Left lung (tissue), 14 donors: ENCODE measurements at regions of chr5 and their contacts with region 1.

Region 1: GRCh38 chr5:32239385-32239784 is 65.3 kb upstream of the GOLPH3 start:
- DNase-seq: peak in 1 of 4 donors; percentile 7
- ATAC-seq: no peak
- H3K4me3 ChIP-seq: no peak overlapping the region
- H3K27ac ChIP-seq: no peak overlapping the region
- H3K4me1 ChIP-seq: peaks cover 2 to 6% of the 10 kb centered on the region in 2 donors
- H3K27me3 ChIP-seq: no peaks in the 10 kb centered on the region
- CTCF ChIP-seq: no peak

Region 2: GRCh38 chr5:31853398-31854135 is 385.8 kb before region 1 on chr5:
- intact Hi-C with region 1: no loop called
- DNase-seq: peak in 1 of 4 donors; percentile 41
- ATAC-seq: peak; percentile 74
- H3K4me3 ChIP-seq: peak overlapping the region in 1 of 2 donors; percentile 53
- H3K27ac ChIP-seq: peak overlapping the region; percentile 74 to 87
- H3K4me1 ChIP-seq: peaks cover 10 to 22% of the 10 kb centered on the region in 2 donors
- H3K27me3 ChIP-seq: peaks cover 0 to 32% of the 10 kb centered on the region in 2 donors
- CTCF ChIP-seq: no peak

Region 3: DNA sequence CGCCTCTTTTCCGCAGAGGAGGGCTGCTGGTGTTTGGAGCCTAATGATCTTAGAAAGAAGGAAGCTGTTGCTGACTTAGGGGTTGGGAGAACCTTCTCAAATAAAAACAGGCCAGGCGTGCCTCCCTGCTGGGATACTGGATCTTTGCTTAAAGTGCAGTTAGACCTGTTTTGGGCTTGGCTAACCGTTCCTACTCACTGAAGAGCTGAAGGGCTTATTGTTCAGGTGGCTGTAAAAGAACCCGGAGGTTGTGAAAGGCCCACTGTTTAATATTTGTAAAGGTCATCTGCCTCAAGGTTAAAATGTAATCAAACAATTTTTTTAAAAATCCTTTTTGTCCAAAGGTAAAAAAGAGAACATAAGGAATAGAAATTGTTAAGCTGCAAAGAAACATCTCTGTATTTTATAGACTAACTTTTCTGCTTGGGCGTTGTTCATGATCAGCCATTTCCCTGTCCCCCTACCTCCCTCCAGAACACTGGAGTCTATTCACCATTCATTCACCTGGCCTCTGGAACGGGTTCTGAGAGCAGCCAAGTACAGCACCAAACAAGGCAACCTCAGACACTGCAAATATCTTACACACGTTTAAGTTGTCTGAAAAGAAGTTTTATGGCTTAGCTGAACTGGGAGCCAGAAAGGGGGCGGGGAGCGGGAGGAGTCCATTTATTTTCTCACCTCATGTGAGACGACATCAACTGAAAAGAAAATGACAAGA is 92.0 kb after region 1 on chr5:
- intact Hi-C with region 1: loop called in 1 of 2 experiments (anchors 5 kb)
- DNase-seq: peak in 1 of 4 donors; percentile 71
- ATAC-seq: peak; percentile 70
- H3K4me3 ChIP-seq: no peak overlapping the region
- H3K27ac ChIP-seq: no peak overlapping the region
- H3K4me1 ChIP-seq: no peaks in the 10 kb centered on the region
- H3K27me3 ChIP-seq: no peaks in the 10 kb centered on the region
- CTCF ChIP-seq: no peak

Region 4: GRCh38 chr5:32531885-32532520 is 292.6 kb after region 1 on chr5:
- intact Hi-C with region 1: no loop called
- DNase-seq: no peak
- ATAC-seq: peak; percentile 49
- H3K4me3 ChIP-seq: no peak overlapping the region
- H3K27ac ChIP-seq: no peak overlapping the region
- H3K4me1 ChIP-seq: peaks cover 0 to 10% of the 10 kb centered on the region in 2 donors
- H3K27me3 ChIP-seq: no peaks in the 10 kb centered on the region
- CTCF ChIP-seq: no peak

Region 5: DNA sequence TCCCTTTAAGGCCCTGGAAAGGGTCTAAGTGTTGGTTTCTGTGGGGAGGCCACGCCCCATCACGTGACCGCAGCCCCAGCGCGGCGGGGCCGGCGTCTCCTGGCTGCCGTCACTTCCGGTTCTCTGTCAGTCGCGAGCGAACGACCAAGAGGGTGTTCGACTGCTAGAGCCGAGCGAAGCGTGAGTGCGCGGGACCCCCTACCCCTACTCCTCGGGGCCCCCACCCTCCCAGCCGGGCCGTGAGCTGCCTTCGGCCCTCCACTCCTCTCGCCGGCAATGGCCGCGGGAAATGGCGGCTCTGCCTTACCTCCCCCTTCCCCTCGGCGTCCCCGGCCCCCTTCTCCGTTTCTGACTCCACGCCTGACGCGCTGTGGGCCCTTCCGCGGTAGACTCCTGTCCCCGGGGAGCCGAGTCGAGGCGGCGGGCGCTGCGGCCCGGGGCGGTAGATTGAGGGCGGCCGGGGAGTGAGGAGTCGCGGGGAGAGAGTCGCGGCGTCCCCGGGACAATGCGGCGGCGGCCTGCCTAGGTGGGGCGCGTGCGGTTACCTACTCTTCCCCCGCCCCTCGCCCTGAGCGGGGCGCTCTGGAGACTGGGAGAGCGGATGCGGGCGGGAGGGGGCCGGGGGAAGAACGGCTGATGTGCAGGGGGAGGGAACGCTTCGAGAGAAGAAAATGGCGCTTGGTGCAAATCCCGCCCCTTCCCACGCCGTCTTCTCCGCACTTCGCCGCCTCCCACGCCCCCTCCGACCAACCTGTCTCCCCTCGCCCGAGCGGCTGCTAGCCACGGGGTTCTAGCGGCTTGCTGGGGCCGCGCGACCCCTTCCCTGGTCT is 346.3 kb after region 1 on chr5 and contains the start of gene SUB1:
- intact Hi-C with region 1: no loop called
- DNase-seq: peak; percentile 91 to 97 (median 96)
- ATAC-seq: peak; percentile 92
- H3K4me3 ChIP-seq: peak within 1 kb of the TSS; percentile 88
- H3K27ac ChIP-seq: peak within 1 kb of the TSS; percentile 99
- H3K4me1 ChIP-seq: peaks cover 23 to 81% of the 10 kb centered on the region in 2 donors
- H3K27me3 ChIP-seq: no peaks in the 10 kb centered on the region
- CTCF ChIP-seq: no peak
- polyA plus RNA-seq, gene SUB1: 245 to 289 (median 262) TPM

Region 6: GRCh38 chr5:32734827-32735378 is 495.5 kb after region 1 on chr5:
- intact Hi-C with region 1: no loop called
- DNase-seq: no peak
- ATAC-seq: no peak
- H3K4me3 ChIP-seq: no peak overlapping the region
- H3K27ac ChIP-seq: no peak overlapping the region
- H3K4me1 ChIP-seq: no peaks in the 10 kb centered on the region
- H3K27me3 ChIP-seq: no peaks in the 10 kb centered on the region
- CTCF ChIP-seq: no peak